ENCODE measurements at regions of chrX and their contacts with region 1.

Region 1: DNA sequence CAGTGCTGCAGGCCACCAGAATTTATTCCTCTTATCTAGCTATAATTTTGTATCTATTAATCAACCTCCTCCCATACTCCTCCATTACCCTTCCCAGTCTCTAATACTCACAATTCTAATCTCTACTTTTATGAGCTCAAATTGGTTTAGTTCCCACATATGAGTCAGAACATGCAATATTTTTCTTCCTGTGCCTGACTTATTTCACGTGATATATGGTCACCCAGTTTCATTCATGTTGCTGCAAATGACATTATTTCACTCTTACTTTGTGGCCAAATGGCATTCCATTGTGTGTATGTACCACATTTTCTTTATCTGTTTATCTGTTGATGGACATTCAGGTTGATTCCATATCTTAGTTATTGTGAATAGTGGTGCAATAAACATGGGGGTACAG is 483.5 kb downstream of the ACTRT1 start:
- DNase-seq: no peak
- H3K4me3 ChIP-seq: no peak overlapping the region
- CTCF ChIP-seq: no peak

Region 2: DNA sequence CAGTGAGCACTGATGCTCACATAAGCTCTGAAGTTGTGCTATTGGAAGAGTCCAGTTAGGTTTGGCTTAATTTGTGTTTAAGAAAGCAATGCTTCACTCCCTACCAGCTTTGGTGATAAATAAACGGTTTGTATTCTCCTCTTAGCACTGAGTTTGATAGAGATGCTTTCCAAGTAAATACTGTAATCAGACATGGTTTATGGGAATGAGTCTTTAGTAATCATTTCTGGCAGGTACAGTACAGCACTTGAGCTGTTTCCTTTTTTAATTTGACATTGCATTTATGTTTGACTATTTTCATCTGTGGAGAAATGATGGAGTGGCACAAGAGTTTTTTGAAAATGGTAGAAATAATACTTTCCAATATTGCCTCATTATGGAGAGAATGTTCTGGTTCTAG is 28.2 kb after region 1 on chrX:
- in situ Hi-C with region 1: no loop called
- DNase-seq: no peak
- H3K4me3 ChIP-seq: no peak overlapping the region
- CTCF ChIP-seq: no peak

Region 3: DNA sequence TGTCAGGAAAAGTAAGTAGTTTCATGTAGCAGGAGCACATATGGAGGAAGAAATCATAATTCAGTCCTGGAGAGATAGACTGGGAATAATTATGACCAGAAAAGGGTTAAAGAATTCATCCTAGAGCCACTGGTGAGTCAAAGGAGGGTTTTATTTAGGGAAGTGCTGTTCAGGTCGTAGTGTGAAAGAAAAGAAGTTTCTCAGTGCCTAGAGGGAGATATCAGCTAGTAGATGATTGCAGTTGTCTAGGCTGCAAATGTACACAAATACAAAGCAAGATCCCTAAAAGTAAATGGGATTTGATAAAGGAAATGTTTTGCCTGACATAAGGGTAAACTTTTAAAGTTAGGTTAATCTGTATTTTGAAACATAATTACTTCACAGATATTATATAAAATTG is 80.3 kb after region 1 on chrX:
- in situ Hi-C with region 1: loop called (anchors 5 kb)
- DNase-seq: no peak
- H3K4me3 ChIP-seq: no peak overlapping the region
- CTCF ChIP-seq: no peak